Activated T-helper 2 cell treated with anti-CD3 and anti-CD28 coated beads, Interferon-gamma antibody, Interleukin-2, Interleukin-4, amounts not matched to agents 10 μg/mL and 5 μg/mL and 100 μg/mL, durations not matched to agents 14 hours and 24 hours and 36 hours (primary cell): ENCODE measurements at regions of chr9 and their contacts with region 1.

Region 1: GRCh38 chr9:91727316-91727861 is 222.6 kb downstream of the ROR2 start:
- DNase-seq: peak; percentile 24
- H3K4me3 Mint-ChIP-seq: no peak overlapping the region
- H3K27ac Mint-ChIP-seq: no peak overlapping the region
- H3K4me1 Mint-ChIP-seq: peaks cover 14% of the 10 kb centered on the region
- H3K27me3 Mint-ChIP-seq: peaks cover 9% of the 10 kb centered on the region

Region 2: DNA sequence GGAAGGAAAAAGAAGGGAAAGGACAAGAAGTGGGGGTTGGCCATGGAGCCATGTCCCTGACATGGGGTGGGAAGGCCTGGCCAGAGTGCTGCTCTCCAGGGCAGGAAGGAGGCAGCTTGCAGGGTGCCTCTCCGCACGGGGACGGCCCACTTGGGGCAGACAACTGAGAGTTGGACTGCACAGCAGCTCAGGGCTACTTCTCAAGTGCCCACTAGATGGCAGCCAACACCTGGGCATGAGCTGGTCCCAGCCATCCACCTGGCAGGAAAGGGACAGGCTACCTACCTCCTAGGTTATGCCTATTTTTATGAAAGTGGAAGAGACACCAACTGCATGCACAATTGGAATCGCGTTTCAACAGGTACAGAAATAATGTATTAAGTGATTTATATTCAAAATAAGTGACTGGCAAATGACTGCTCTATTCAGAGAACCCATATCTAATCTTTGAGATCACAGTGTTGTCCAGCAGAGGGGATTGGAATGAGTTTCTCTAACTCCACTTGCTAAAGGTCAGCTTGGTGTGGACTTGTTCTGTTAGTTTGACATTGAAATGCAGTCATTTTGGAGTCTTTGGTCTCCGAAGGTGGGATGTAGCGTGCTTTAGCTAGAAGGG is 812.4 kb before region 1 on chr9:
- intact Hi-C with region 1: loop called (anchors 2 kb)
- DNase-seq: peak; percentile 54
- H3K4me3 Mint-ChIP-seq: no peak overlapping the region
- H3K27ac Mint-ChIP-seq: peak overlapping the region; percentile 62
- H3K4me1 Mint-ChIP-seq: peaks cover 14% of the 10 kb centered on the region
- H3K27me3 Mint-ChIP-seq: no peaks in the 10 kb centered on the region

Region 3: DNA sequence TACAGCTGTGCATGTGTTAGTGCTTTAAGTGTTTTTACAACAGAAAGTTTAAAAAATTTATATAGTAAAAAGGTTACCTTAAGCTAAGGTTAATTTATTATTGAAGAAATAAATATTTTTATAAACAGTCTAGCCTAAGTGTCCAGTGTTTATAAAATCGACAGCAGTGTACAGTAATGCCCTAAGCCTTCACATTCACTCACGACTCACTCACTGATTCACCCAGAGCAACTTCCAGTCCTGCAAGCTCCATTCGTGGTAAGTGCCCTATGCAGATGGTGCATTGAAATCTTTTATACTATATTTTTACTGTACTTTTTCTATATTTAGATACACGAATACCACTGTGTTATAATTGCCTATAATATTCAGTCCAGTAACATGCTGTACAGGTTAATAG is 63.5 kb after region 1 on chr9:
- intact Hi-C with region 1: no loop called
- DNase-seq: no peak
- H3K4me3 Mint-ChIP-seq: no peak overlapping the region
- H3K27ac Mint-ChIP-seq: no peak overlapping the region
- H3K4me1 Mint-ChIP-seq: peaks cover 2% of the 10 kb centered on the region
- H3K27me3 Mint-ChIP-seq: peaks cover 11% of the 10 kb centered on the region